ENCODE measurements at regions of chr5 and their contacts with region 1.

Region 1: DNA sequence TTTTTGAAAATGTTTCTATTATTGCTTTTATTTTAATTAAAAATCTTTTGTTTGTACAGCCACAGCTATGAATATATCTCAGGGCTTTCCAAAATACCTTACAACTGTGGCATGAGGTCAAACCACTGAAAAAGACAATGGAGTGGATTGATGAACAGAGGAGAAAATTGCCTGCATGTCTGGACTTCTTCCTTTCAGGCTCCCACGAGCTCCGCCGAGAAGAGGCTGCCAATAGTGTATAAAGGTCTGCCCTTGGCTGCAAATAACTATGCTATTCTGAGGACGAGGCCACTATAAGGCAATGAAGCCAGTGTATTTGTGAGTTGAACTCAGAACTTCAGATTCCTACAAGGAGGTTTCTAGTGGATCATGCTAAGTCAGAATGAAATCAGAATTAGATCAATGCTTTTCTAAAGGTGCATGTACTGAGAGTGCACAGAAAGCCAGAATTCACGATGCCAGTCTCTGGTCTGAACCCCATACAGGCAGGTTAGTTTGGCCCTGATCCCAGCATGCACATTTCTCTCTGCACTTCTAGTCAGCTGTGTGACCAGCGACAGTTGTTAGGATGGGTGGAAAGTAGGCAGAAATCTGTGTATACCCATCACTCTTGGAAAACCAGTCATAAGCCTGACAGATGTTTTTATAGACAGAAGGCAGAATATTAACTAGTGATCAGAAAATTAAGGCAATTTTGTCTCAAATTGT is 42.7 kb upstream of the PLPP1 start:
- DNase-seq: no peak

Region 2: GRCh38 chr5:55534436-55535198 is 42.9 kb before region 1 on chr5 and contains the start of gene PLPP1:
- intact Hi-C with region 1: loop called (anchors 2 kb)
- DNase-seq: peak; percentile 96
- total RNA-seq, gene PLPP1: 102 TPM